Activated CD4-positive, alpha-beta T cell treated with anti-CD3 and anti-CD28 coated beads, Interleukin-2, amount 10 ng/mL, durations not matched to agents 7 days and 5 days (primary cell): ENCODE measurements at regions of chr14 and their contacts with region 1.

Region 1: DNA sequence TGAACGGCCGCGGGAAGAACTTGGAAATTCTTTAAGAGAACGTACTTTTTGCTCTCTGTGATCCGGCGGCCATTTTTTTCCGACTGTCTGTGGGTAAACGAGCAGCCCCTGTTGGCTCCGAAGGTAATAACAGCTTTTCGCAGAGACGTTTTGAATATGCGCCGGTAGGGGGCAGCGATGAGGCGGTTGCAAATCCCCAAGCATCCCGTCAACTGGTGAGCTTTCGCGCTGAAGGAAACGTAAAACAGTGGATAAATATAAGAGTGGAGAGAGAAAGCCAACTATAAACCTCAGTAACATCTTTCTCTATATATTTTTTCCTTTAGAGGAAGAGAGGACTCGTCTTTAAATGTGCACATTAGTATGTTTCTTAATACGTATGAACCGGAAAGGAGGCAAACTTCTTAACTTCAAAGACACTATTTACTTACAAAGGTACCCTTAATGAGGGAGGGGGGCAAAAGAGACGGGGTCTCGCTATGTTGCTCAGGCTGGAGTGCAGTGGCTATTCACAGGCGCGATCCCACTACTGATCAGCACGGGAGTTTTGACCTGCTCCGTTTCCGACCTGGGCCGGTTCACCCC is 9.6 kb upstream of the NEMF start:
- DNase-seq: peak; percentile 88
- H3K4me3 Mint-ChIP-seq: no peak overlapping the region
- H3K27ac Mint-ChIP-seq: no peak overlapping the region
- H3K4me1 Mint-ChIP-seq: peaks cover 27% of the 10 kb centered on the region
- H3K27me3 Mint-ChIP-seq: no peaks in the 10 kb centered on the region

Region 2: GRCh38 chr14:49820176-49820575 is 42.0 kb before region 1 on chr14:
- CTCF ChIA-PET with region 1: interaction called, 10 read pairs
- POLR2A ChIA-PET with region 1: no interaction called
- DNase-seq: no peak
- H3K4me3 Mint-ChIP-seq: no peak overlapping the region
- H3K27ac Mint-ChIP-seq: no peak overlapping the region
- H3K4me1 Mint-ChIP-seq: no peaks in the 10 kb centered on the region
- H3K27me3 Mint-ChIP-seq: no peaks in the 10 kb centered on the region

Region 3: DNA sequence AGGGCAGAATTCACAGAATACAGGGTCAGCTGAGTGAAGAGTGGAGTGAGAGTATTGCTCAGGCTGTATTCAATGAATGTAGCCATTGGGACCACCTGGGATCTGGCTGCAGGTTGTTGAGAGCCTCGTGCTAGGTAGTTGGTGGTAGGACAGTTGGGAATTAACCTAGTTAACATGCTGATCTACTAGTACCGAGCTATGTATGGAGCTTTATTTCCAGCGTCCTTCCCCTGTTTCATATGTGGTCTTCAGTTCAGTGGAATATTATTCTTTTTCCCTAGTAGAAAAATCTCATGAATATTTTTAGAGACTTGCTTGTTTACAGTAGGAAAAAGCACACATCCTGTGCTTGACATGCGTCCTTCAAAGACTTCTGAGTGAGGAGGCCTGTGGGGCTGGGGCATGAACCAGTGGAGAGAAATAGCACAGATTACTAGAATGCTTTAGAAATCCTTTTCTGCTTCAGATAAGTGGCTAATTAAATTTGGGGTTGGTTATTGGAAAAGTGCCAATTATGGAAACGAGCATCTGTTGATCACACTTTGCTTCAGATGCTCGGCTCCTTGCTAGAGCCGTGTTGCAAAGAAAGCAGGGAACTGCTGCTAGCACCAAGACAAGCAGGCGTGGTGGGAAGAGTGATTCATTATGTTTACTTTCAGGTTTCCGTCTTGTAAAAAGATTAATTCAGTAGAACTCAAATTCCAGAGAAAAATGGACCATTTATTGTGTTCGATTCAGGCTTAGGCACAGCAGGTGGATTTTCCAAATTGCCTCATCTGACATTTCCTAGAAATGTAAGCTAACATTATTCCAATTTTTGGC is 84.3 kb after region 1 on chr14:
- CTCF ChIA-PET with region 1: interaction called, 11 read pairs
- POLR2A ChIA-PET with region 1: interaction called, 7 read pairs
- DNase-seq: peak; percentile 45
- H3K4me3 Mint-ChIP-seq: peak overlapping the region; percentile 58
- H3K27ac Mint-ChIP-seq: peak overlapping the region; percentile 91
- H3K4me1 Mint-ChIP-seq: peaks cover 73% of the 10 kb centered on the region
- H3K27me3 Mint-ChIP-seq: no peaks in the 10 kb centered on the region

Region 4: DNA sequence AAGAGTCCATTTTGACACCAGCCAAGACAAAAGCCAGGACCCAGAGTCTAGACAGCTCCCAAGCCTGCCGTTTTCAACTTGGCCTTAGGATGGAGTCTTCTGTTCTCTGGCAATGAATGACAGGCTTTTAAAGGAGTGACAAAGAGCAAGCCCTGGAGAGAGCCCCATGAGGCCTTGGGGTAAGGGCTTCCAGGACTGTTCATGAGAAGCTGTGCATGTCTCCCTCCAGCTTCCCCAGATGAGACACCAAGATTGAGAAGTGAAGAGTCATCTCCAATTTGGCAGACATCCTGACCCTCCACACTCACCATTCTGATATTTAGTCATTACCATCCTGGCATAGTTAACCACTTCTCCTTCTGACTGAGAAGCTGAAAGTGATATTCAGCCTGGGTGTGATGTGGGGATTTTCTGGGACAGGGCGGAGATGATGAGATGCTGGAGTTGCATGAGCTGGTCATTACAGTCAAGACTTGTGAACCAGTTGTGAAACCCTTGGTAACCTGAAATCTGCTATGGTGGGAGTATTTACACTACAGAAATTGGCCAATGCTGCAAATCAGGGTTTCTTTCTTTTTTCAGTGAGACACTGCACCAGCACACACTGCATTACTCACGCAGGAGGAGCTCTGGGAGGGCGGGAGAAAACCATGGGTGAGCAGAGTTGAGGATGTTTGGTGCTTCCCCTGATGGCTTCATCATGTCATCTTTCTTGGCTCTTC is 176.4 kb after region 1 on chr14:
- CTCF ChIA-PET with region 1: interaction called, 30 read pairs
- POLR2A ChIA-PET with region 1: interaction called, 3 read pairs
- DNase-seq: peak; percentile 46
- H3K4me3 Mint-ChIP-seq: peak overlapping the region; percentile 48
- H3K27ac Mint-ChIP-seq: peak overlapping the region; percentile 96
- H3K4me1 Mint-ChIP-seq: peaks cover 74% of the 10 kb centered on the region
- H3K27me3 Mint-ChIP-seq: no peaks in the 10 kb centered on the region

Region 5: DNA sequence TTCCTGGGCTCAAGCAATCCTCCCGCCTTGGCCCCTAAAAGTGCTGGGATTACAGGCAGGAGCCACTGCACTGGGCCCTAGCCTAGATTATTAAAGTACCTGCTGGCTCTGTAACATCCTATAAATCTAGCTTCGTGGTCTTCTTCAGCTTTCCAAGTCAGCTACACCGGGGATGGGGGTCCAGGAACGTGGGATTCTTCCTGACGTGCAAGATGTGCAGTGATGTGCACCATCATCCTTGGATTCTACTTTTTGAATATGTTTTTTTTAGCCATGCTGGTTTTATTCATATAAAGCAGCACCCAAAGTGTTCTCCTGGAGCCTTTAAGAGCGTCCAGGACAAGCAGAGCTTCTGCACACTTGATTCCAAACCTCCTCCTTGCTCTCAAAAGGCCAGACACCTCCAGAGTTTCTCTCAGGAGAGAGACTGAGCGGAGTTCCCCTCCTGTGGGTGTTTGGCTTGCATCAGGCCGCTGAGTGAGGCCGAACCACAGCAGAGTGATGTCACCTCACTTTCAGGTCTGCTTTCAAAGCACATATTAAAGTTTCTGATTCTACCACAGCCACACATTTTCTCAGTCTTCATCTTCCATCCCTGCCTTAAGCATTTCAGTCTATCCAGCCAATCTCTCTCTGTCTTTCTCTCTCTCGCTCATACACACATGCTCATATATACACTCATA is 220.7 kb after region 1 on chr14:
- CTCF ChIA-PET with region 1: interaction called, 12 read pairs
- POLR2A ChIA-PET with region 1: no interaction called
- DNase-seq: peak; percentile 91
- H3K4me3 Mint-ChIP-seq: peak overlapping the region; percentile 74
- H3K27ac Mint-ChIP-seq: peak overlapping the region; percentile 98
- H3K4me1 Mint-ChIP-seq: peaks cover 85% of the 10 kb centered on the region
- H3K27me3 Mint-ChIP-seq: no peaks in the 10 kb centered on the region